Activated B cell treated with CpG ODN at 0.5 μM for 24 hours (primary cell): ENCODE measurements at regions of chr7 and their contacts with region 1.

Region 1: GRCh38 chr7:30564243-30564892 is 30.3 kb upstream of the GARS1 start:
- DNase-seq: peak; percentile 65
- ATAC-seq: peak; percentile 97
- H3K4me3 Mint-ChIP-seq: no peak overlapping the region
- H3K27ac Mint-ChIP-seq: no peak overlapping the region
- H3K4me1 Mint-ChIP-seq: no peaks in the 10 kb centered on the region
- H3K27me3 Mint-ChIP-seq: no peaks in the 10 kb centered on the region
- CTCF ChIP-seq: peak; percentile 38

Region 2: DNA sequence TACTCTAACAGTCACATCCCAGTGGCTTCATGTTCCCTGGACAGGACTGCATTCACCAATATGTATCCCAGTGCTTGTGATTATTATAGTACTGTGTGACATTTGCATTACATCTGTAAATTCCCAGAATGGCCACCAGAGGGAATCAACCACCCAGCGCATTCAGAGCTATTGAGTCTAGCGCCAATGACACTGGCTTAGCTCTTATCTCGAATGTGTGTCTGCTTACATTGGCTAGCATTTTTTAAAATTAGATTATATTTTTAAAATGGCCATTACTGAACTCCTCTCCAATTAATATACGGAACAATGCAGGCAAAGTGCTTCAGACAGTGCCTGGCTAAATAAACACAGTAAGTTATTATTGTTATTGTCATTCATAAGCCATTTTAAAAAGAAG is 1642.5 kb before region 1 on chr7:
- CTCF ChIA-PET with region 1: no interaction called
- POLR2A ChIA-PET with region 1: no interaction called
- intact Hi-C with region 1: loop called (anchors 5 kb)
- DNase-seq: no peak
- ATAC-seq: peak; percentile 87
- H3K4me3 Mint-ChIP-seq: no peak overlapping the region
- H3K27ac Mint-ChIP-seq: no peak overlapping the region
- H3K4me1 Mint-ChIP-seq: peaks cover 12% of the 10 kb centered on the region
- H3K27me3 Mint-ChIP-seq: peaks cover 3% of the 10 kb centered on the region
- CTCF ChIP-seq: peak; percentile 83

Region 3: DNA sequence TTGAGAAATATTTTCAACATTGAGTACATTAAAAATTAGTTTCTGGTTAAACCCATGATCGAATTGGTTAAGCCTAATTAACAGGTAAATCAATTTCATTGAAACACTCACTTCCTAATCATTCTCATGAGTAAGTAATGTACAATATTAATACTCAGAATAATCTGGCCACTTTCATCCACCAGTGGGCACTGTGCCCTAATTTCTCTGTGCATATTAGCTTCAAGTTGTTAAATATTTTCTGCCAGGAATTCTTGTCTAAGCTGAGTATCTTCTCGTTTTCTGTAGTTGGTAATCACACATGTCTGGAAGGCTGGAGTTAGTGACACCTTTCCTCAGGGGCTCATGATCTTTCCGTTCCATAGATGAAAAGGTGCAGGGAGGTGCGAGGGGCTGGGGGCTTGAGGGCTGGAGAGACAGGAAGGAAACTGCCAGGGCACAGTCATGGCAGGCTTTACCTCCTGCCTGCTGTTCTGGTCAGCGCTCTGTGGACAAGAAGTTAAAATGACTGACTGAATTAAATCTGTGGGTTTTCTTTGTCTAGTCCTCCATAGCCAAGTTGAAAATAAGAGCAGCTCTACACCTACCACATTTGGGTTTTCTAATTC is 686.2 kb before region 1 on chr7:
- CTCF ChIA-PET with region 1: interaction called, 23 read pairs
- POLR2A ChIA-PET with region 1: no interaction called
- intact Hi-C with region 1: loop called (anchors 1 kb)
- DNase-seq: no peak
- ATAC-seq: peak; percentile 31
- H3K4me3 Mint-ChIP-seq: no peak overlapping the region
- H3K27ac Mint-ChIP-seq: no peak overlapping the region
- H3K4me1 Mint-ChIP-seq: peaks cover 3% of the 10 kb centered on the region
- H3K27me3 Mint-ChIP-seq: peaks cover 12% of the 10 kb centered on the region
- CTCF ChIP-seq: peak; percentile 37

Region 4: DNA sequence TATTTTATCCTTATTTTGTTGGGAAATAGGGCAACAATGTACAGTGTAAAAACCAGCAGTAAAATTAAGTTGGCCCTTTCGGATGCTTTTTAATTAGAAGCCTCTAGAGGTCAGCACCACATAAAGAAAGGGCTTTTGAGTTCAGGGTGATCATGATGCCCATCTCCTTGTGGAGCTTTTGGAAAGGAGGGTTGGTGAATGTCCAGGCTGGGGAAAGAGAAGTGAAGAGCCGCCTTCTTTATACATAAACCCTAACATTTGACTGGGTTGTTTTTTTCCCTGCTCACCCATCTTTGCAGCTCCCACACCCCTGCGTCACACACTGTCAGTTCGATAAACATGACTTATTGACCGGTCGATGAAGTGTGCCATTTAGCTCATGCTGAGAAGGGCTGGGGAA is 399.8 kb before region 1 on chr7:
- CTCF ChIA-PET with region 1: interaction called, 8 read pairs
- POLR2A ChIA-PET with region 1: no interaction called
- intact Hi-C with region 1: loop called (anchors 1 kb)
- DNase-seq: no peak
- ATAC-seq: peak; percentile 49
- H3K4me3 Mint-ChIP-seq: no peak overlapping the region
- H3K27ac Mint-ChIP-seq: peak overlapping the region; percentile 38
- H3K4me1 Mint-ChIP-seq: peaks cover 39% of the 10 kb centered on the region
- H3K27me3 Mint-ChIP-seq: no peaks in the 10 kb centered on the region
- CTCF ChIP-seq: no peak

Region 5: DNA sequence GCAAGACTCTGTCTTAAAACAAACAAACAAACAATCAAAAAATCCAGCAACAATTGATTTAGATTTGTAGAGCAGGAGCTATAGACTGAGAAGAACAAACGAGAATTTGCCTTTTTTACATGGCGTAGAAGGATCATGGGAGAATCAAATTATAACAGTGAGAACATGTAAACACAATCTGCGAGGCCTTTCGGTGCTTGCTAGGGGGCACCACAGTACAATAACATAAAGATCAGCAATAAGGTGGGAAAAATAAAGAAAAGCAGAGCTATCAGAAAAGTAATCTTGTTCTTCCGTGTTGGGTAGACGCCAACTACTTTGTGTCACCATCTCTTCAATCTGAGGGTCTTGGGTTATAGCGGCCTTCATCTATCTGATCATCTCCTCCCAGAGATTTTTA is 168.0 kb before region 1 on chr7:
- CTCF ChIA-PET with region 1: interaction called, 18 read pairs
- POLR2A ChIA-PET with region 1: no interaction called
- intact Hi-C with region 1: loop called (anchors 1 kb)
- DNase-seq: no peak
- ATAC-seq: peak; percentile 25
- H3K4me3 Mint-ChIP-seq: no peak overlapping the region
- H3K27ac Mint-ChIP-seq: no peak overlapping the region
- H3K4me1 Mint-ChIP-seq: peaks cover 4% of the 10 kb centered on the region
- H3K27me3 Mint-ChIP-seq: no peaks in the 10 kb centered on the region
- CTCF ChIP-seq: no peak

Region 6: DNA sequence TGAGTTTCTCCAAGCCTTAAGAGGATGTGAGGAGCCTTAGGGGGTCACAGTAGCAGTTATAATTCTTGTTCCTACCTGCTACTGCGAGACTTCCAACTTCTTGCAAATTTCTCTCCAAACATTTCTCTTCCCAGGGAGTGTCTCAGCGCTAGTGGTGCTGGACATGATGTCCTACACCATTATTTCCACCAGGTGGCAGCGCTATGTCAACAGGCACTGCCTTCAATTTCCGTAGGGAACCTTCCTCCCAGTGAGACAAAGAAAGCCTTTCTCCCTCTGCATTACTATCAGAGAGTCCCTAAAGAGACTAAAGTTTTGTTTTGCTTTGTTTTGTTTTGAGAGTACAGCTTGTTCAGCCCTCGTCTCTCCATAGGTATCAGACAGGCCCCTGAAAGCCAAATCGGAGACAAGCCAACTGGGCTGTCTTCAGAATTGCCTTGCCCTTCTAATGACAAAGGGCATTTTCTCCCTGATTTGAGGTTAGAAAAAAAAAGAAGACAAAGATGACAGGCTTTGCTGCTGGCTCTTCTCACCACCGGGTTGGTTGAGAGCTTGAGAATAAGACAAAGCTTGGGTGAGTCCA is 15.5 kb before region 1 on chr7:
- CTCF ChIA-PET with region 1: interaction called, 31 read pairs
- POLR2A ChIA-PET with region 1: no interaction called
- intact Hi-C with region 1: loop called (anchors 2 kb)
- DNase-seq: no peak
- ATAC-seq: peak; percentile 57
- H3K4me3 Mint-ChIP-seq: no peak overlapping the region
- H3K27ac Mint-ChIP-seq: no peak overlapping the region
- H3K4me1 Mint-ChIP-seq: peaks cover 10% of the 10 kb centered on the region
- H3K27me3 Mint-ChIP-seq: no peaks in the 10 kb centered on the region
- CTCF ChIP-seq: peak; percentile 47